ENCODE measurements at regions of chr17 and their contacts with region 1.

Region 1: GRCh38 chr17:5191541-5192417 is at the start of gene ZNF594:
- DNase-seq: peak; percentile 96 to 99 (median 98)
- ATAC-seq: peak; percentile 99
- H3K4me3 ChIP-seq: peak within 1 kb of the TSS; percentile 79 to 91
- H3K4me3 Mint-ChIP-seq: peak within 1 kb of the TSS; percentile 93
- H3K27ac ChIP-seq: peak within 1 kb of the TSS; percentile 77 to 88
- H3K27ac Mint-ChIP-seq: peak within 1 kb of the TSS; percentile 93
- H3K4me1 ChIP-seq: peaks cover 21% of the 10 kb centered on the region
- H3K4me1 Mint-ChIP-seq: peaks cover 31% of the 10 kb centered on the region
- H3K27me3 ChIP-seq: no peaks in the 10 kb centered on the region
- H3K27me3 Mint-ChIP-seq: no peaks in the 10 kb centered on the region
- CTCF ChIP-seq: peak; percentile 68
- total RNA-seq, gene ZNF594: 3.2 to 3.3 TPM

Region 2: GRCh38 chr17:5078106-5079028 is 113.4 kb before region 1 on chr17 and contains the start of gene ZFP3:
- CTCF ChIA-PET with region 1: interaction called, 5 read pairs
- POLR2A ChIA-PET with region 1: no interaction called
- intact Hi-C with region 1: loop called (anchors 1 to 5 kb)
- DNase-seq: peak; percentile 43 to 88 (median 73)
- ATAC-seq: peak; percentile 75
- H3K4me3 ChIP-seq: peak within 1 kb of the TSS; percentile 76 to 80
- H3K4me3 Mint-ChIP-seq: peak within 1 kb of the TSS; percentile 96
- H3K27ac ChIP-seq: peak within 1 kb of the TSS; percentile 65 to 76
- H3K27ac Mint-ChIP-seq: peak within 1 kb of the TSS; percentile 95
- H3K4me1 ChIP-seq: peaks cover 14% of the 10 kb centered on the region
- H3K4me1 Mint-ChIP-seq: peaks cover 29% of the 10 kb centered on the region
- H3K27me3 ChIP-seq: no peaks in the 10 kb centered on the region
- H3K27me3 Mint-ChIP-seq: no peaks in the 10 kb centered on the region
- CTCF ChIP-seq: peak; percentile 29
- total RNA-seq, gene ZFP3: 2.6 to 2.7 TPM

Region 3: GRCh38 chr17:5237541-5238016 is 45.8 kb after region 1 on chr17:
- CTCF ChIA-PET with region 1: interaction called, 15 read pairs
- POLR2A ChIA-PET with region 1: interaction called, 7 read pairs
- intact Hi-C with region 1: loop called in 1 of 2 experiments (anchors 1 kb)
- DNase-seq: peak in 7 of 9 experiments; percentile 31 to 77 (median 45)
- ATAC-seq: peak; percentile 44
- H3K4me3 ChIP-seq: no peak overlapping the region
- H3K4me3 Mint-ChIP-seq: no peak overlapping the region
- H3K27ac ChIP-seq: peak overlapping the region; percentile 1 to 78
- H3K27ac Mint-ChIP-seq: peak overlapping the region; percentile 74
- H3K4me1 ChIP-seq: peaks cover 32% of the 10 kb centered on the region
- H3K4me1 Mint-ChIP-seq: peaks cover 53% of the 10 kb centered on the region
- H3K27me3 ChIP-seq: no peaks in the 10 kb centered on the region
- H3K27me3 Mint-ChIP-seq: no peaks in the 10 kb centered on the region
- CTCF ChIP-seq: peak; percentile 35

Region 4: GRCh38 chr17:5419356-5419958 is 227.7 kb after region 1 on chr17 and contains the start of gene NUP88:
- CTCF ChIA-PET with region 1: no interaction called
- POLR2A ChIA-PET with region 1: interaction called, 5 read pairs
- intact Hi-C with region 1: loop called (anchors 1 to 2 kb)
- DNase-seq: peak; percentile 92 to 99 (median 96)
- ATAC-seq: peak; percentile 87
- H3K4me3 ChIP-seq: peak within 1 kb of the TSS; percentile 93 to 96
- H3K4me3 Mint-ChIP-seq: peak within 1 kb of the TSS; percentile 99
- H3K27ac ChIP-seq: peak within 1 kb of the TSS; percentile 91 to 99
- H3K27ac Mint-ChIP-seq: peak within 1 kb of the TSS; percentile 99
- H3K4me1 ChIP-seq: peaks cover 44% of the 10 kb centered on the region
- H3K4me1 Mint-ChIP-seq: peaks cover 47% of the 10 kb centered on the region
- H3K27me3 ChIP-seq: no peaks in the 10 kb centered on the region
- H3K27me3 Mint-ChIP-seq: no peaks in the 10 kb centered on the region
- CTCF ChIP-seq: no peak
- total RNA-seq, gene NUP88: 149 to 156 TPM

Region 5: DNA sequence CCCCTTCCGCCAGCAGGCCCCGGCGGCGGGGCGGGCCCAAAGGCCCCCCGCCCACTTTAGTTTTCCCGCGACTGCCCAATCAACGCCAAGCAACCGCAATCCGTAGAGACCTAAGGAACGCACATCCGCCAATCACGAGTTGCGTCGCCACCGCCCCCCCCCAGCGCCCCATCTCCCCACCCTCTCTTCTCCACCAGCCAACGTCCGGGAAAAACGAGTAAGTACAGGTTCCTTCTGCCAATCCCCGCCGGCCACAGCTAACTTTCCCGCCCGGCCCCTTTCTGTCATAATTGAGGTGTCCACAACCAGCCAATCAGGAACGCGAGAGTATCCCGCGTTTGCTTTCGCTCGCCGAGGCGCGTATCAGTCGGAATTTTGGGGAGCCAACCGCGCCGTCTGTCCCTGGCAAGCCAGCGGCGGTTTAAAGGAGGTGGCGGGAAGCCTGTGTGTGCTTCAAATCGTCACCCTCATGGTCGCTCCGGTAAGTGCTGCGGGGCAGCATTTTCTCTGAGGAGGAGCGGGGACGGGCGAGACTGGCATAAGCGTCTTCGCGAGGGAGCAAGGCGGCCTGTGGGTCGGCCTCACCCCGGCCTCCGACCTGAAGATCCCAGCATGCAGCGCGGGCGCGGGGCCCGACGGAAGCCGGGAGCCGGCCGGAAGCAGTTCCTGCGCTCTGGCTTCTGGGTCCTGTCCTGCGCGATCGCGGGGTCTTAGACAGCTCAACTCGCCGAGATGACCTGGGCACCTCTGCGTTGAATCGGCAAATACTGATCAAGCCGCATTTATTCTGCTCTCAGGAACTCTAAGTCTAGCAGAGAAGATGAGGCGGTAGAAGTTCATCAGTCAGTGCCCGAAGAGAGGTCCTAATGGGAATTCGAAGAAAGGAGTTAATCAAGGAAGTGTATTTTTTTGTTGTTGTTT is 294.7 kb after region 1 on chr17 and contains the start of gene MIS12:
- CTCF ChIA-PET with region 1: no interaction called
- POLR2A ChIA-PET with region 1: interaction called, 5 read pairs
- intact Hi-C with region 1: loop called in 1 of 2 experiments (anchors 5 kb)
- DNase-seq: peak; percentile 93 to 100 (median 97)
- ATAC-seq: peak; percentile 89
- H3K4me3 ChIP-seq: peak within 1 kb of the TSS; percentile 94
- H3K4me3 Mint-ChIP-seq: peak within 1 kb of the TSS; percentile 94
- H3K27ac ChIP-seq: peak within 1 kb of the TSS; percentile 98 to 99
- H3K27ac Mint-ChIP-seq: peak within 1 kb of the TSS; percentile 95
- H3K4me1 ChIP-seq: peaks cover 28% of the 10 kb centered on the region
- H3K4me1 Mint-ChIP-seq: peaks cover 60% of the 10 kb centered on the region
- H3K27me3 ChIP-seq: no peaks in the 10 kb centered on the region
- H3K27me3 Mint-ChIP-seq: no peaks in the 10 kb centered on the region
- CTCF ChIP-seq: no peak
- total RNA-seq, gene MIS12: 21.9 to 24.4 TPM

Region 6: DNA sequence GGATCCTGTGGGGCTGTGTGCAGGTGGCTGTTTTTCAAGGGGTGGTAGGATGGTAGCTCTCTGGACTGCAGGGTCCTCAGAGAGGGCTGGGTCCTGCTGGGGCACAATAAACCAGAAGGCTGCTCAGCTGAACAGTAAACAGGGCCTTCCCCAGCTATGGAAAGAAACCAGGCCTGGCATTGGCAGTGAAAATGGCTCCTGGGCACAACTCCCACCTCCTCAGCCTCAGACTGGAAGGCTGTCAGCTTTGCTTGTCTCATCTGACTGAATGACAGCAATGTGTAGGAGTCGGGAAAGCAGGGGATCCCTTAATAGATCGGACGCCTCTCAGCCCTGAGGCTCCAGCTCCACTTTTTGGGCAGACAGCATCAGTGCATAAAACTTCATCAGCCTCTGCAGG is 452.3 kb after region 1 on chr17:
- CTCF ChIA-PET with region 1: no interaction called
- POLR2A ChIA-PET with region 1: no interaction called
- intact Hi-C with region 1: no loop called
- DNase-seq: no peak
- ATAC-seq: no peak
- H3K4me3 ChIP-seq: no peak overlapping the region
- H3K4me3 Mint-ChIP-seq: no peak overlapping the region
- H3K27ac ChIP-seq: no peak overlapping the region
- H3K27ac Mint-ChIP-seq: no peak overlapping the region
- H3K4me1 ChIP-seq: no peaks in the 10 kb centered on the region
- H3K4me1 Mint-ChIP-seq: no peaks in the 10 kb centered on the region
- H3K27me3 ChIP-seq: no peaks in the 10 kb centered on the region
- H3K27me3 Mint-ChIP-seq: peaks cover 5% of the 10 kb centered on the region
- CTCF ChIP-seq: no peak

Measured in CD8-positive, alpha-beta T cell (primary cell).